Mammary epithelial cell (primary cell): ENCODE measurements at regions of chr1 and their contacts with region 1.

Region 1: GRCh38 chr1:38818175-38818976 is 41.2 kb downstream of the RRAGC start:
- DNase-seq: no peak
- H3K4me3 ChIP-seq: no peak overlapping the region
- H3K27ac ChIP-seq: no peak overlapping the region
- H3K4me1 ChIP-seq: peaks cover 3% of the 10 kb centered on the region
- H3K27me3 ChIP-seq: peaks cover 5% of the 10 kb centered on the region
- CTCF ChIP-seq: peak; percentile 54 to 59

Region 2: DNA sequence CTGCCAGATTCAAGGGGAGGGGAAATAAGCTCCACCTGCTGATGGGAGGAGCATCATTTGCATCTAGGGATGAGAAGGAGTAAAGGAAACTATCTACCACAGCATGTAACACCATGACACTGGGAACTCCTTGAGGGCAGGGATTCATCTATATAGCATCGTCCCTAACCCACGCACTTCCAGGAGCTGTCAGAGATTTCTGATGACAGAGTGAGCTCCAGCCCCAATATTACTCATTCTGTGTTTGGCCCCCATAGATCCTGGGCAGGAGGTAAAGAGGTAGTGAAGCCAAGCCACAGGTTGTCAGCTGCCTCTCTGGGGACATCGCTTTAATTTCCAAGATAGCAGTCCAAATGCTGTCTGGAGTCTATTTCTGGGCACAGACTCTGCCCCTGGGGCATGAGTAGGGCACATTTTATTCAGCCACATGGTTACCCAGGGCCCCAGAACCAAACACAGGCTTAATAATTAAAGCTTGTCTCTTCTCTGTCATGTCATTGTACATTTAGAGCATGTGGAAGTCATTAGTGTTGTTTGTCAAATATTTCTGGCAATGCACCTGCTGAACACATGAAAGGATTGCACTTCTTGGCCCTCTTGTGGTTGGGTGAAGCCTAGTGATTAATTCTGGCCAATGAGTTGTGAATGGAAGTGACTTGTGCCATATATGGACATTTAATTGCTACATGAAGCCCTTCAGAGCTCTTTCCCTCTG is 665.9 kb before region 1 on chr1:
- CTCF ChIA-PET with region 1: no interaction called
- dilution Hi-C with region 1: no loop called
- in situ Hi-C with region 1: no loop called
- intact Hi-C with region 1: loop called (anchors 5 kb)
- DNase-seq: peak; percentile 36
- H3K4me3 ChIP-seq: no peak overlapping the region
- H3K27ac ChIP-seq: no peak overlapping the region
- H3K4me1 ChIP-seq: no peaks in the 10 kb centered on the region
- H3K27me3 ChIP-seq: no peaks in the 10 kb centered on the region
- CTCF ChIP-seq: peak; percentile 38 to 59

Region 3: DNA sequence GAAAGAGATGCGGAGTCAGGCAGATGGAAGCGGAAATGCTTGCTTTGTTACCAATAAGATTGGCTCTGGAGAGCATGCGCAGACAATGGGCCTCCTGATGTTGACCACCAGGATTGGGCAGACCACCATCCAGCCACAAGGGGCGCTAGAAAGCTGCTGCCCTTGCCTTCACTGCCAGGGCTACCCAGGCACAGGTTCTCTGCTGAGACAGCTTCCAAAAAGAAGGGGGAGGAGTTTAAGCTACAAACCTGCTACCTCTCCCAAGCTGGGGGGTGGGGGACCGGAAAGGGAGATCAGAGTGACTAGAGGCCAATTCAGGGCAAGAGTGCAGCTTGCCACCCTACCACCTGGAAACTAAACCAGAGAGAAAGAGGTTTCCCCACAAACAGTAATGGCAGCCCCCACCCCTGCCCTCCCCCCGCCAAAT is 328.5 kb before region 1 on chr1:
- CTCF ChIA-PET with region 1: no interaction called
- dilution Hi-C with region 1: no loop called
- in situ Hi-C with region 1: no loop called
- intact Hi-C with region 1: loop called (anchors 10 kb)
- DNase-seq: no peak
- H3K4me3 ChIP-seq: no peak overlapping the region
- H3K27ac ChIP-seq: no peak overlapping the region
- H3K4me1 ChIP-seq: no peaks in the 10 kb centered on the region
- H3K27me3 ChIP-seq: no peaks in the 10 kb centered on the region
- CTCF ChIP-seq: peak; percentile 49 to 59

Region 4: DNA sequence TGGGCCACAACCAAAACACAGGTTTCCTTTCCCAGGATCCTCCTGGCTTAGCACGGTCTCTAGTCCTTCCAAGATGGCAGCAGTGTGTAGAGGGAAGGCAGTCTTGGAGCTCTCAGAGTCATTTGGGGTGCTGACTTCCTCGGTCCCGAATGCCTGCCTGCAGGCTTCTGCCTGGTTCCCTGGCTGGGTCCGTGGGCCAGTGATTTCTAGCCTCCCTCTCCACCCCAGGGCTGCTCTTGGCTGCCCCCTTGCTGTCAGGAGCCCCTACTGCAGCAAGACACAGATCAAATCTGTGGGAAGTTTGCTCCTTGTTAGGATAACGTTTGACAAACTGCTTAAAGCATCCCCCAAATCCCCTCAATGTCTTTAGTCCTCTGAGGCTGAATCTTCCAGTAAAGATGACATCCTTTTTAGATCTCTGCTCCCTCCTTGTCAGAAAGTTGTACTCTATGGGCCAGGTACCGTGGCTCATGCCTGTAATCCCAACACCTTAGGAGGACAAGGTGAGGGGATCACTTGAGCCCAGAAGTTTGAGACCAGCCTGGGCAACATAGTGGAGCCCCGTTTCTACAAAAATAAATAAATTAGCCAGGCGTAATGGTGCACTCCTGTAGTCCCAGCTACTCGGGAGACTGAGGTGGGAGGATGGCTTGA is 231.3 kb before region 1 on chr1:
- CTCF ChIA-PET with region 1: no interaction called
- dilution Hi-C with region 1: no loop called
- in situ Hi-C with region 1: loop called in 1 of 2 experiments (anchors 25 kb)
- intact Hi-C with region 1: loop called (anchors 10 kb)
- DNase-seq: peak; percentile 15
- H3K4me3 ChIP-seq: no peak overlapping the region
- H3K27ac ChIP-seq: no peak overlapping the region
- H3K4me1 ChIP-seq: no peaks in the 10 kb centered on the region
- H3K27me3 ChIP-seq: no peaks in the 10 kb centered on the region
- CTCF ChIP-seq: peak; percentile 92 to 94

Region 5: DNA sequence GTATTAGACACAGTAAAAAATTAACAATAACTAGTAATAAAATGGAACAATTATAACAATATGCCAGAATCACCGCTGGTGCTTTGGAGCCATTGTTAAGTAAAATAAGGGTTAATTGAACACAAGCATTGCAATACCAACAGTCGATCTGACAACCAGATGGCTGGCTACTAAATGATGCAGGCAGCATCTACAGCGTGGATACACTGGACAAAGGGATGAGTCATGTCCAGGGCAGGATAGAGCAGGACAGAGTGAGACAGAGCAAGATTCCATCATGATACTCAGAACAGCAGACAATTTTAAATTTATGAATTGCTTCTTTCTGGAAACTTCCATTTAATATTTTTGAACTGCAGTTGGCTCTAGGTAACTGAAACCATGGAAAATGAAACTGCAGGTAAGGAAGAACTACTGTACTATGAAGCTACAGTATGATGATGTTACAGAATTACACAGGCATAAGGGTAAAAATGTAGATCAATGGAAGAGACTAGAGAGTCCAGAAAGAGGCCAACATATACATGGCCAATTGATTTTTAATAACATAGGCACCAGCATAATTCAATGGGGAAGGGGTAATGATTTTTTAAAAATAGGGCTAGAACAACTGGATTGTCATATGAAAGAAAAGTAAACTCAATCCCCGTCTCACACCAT is 127.5 kb before region 1 on chr1:
- CTCF ChIA-PET with region 1: no interaction called
- dilution Hi-C with region 1: no loop called
- in situ Hi-C with region 1: no loop called
- intact Hi-C with region 1: loop called (anchors 5 kb)
- DNase-seq: peak; percentile 71
- H3K4me3 ChIP-seq: no peak overlapping the region
- H3K27ac ChIP-seq: no peak overlapping the region
- H3K4me1 ChIP-seq: peaks cover 6% of the 10 kb centered on the region
- H3K27me3 ChIP-seq: peaks cover 3% of the 10 kb centered on the region
- CTCF ChIP-seq: no peak

Region 6: DNA sequence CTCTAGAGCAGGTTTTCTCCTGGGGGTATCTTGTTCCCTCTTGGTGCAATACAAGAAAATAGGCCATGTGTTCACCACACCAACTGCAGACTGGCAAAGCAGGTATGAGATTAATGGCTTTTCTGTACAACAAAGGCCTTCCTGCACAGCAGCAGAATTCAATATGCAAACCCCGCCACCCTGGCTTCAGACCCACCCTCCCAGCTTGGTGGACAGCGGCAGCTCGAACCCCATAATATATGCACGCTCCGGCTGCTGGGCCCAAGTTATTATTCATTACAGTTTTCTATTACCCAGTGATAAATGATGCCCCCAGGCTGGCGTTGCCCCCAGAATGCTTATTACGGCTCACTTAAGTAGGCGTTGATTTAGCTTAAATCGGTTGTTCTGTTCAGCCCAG is 103.0 kb before region 1 on chr1:
- CTCF ChIA-PET with region 1: no interaction called
- dilution Hi-C with region 1: no loop called
- in situ Hi-C with region 1: no loop called
- intact Hi-C with region 1: no loop called
- DNase-seq: no peak
- H3K4me3 ChIP-seq: no peak overlapping the region
- H3K27ac ChIP-seq: no peak overlapping the region
- H3K4me1 ChIP-seq: no peaks in the 10 kb centered on the region
- H3K27me3 ChIP-seq: no peaks in the 10 kb centered on the region
- CTCF ChIP-seq: no peak